Head of caudate nucleus (tissue), 42 donors: ENCODE measurements at regions of chr1 and their contacts with region 1.

Region 1: DNA sequence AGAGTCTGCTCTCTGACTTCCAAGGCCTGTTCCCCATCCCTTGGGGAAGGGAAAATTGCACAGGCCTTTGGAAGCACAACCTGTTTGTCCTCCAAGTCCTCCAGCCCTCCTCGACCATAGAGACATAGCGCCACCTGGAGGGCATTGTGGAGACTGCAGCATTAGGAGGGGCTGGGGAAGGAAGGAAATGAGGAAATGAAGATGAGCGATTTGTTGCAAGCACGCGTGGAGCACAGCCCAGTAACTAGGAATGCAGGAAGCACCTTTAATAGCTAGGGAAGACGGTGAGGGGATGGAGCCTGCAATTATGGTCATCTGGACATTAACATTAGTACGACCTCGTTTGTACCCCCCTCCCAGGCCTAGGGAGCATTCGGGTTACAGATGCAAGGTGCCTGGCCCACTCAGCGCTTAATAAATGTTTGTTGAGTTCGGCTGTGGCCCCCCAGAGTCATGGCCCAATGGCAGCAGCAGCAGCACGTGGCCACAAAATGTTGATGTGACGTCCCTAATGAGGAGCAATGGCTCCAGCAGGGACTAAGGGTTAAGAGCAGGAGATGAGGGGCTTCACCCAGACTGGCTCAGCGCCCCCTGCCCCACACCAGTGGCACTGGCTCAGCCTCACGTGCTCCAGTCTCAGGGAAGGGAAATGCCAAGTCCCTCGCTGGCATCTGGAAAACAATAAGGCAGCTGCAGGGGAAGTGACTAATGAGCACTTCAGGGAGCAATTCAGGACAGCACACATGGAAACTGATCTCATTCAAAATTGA is 8.0 kb upstream of the CAMK2N1 start:
- DNase-seq: peak; percentile 56 to 95 (median 89)

Region 2: GRCh38 chr1:19918057-19918456 is 576.0 kb before region 1 on chr1:
- intact Hi-C with region 1: loop called (anchors 10 kb)
- DNase-seq: peak; percentile 62 to 95 (median 86)

Region 3: DNA sequence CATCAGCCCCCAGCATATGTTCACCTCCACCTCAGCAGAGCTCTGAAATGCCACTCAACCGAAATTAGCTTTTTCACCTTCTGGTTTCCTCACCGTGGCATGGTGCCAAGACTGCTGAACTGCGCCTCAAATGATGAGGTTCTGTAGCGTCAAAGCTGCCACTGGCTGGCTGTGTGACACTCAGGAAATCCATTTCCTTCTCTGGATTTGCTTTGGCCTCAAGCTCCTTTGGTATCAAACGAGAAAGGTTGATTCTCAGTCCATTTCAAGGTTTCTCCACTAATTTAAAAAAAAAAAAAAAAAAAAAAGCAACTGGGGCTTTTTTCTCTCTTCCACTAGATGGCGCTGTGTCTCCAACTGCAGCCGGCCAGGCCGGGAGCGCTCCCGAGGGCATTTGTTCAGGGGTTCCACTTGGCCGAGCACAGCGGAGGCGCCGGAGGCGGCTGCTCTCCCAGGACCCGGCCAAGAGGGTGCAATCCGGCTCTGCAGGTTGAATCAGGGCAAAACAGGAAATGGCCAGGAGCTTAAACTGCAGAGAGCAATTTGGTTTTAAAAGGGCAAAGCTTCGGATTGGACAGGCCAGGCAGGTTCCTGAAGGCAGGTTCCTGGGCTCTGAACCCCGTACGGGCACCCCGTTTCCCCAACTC is 281.2 kb before region 1 on chr1:
- intact Hi-C with region 1: loop called (anchors 5 kb)
- DNase-seq: peak; percentile 37 to 86 (median 66)

Region 4: DNA sequence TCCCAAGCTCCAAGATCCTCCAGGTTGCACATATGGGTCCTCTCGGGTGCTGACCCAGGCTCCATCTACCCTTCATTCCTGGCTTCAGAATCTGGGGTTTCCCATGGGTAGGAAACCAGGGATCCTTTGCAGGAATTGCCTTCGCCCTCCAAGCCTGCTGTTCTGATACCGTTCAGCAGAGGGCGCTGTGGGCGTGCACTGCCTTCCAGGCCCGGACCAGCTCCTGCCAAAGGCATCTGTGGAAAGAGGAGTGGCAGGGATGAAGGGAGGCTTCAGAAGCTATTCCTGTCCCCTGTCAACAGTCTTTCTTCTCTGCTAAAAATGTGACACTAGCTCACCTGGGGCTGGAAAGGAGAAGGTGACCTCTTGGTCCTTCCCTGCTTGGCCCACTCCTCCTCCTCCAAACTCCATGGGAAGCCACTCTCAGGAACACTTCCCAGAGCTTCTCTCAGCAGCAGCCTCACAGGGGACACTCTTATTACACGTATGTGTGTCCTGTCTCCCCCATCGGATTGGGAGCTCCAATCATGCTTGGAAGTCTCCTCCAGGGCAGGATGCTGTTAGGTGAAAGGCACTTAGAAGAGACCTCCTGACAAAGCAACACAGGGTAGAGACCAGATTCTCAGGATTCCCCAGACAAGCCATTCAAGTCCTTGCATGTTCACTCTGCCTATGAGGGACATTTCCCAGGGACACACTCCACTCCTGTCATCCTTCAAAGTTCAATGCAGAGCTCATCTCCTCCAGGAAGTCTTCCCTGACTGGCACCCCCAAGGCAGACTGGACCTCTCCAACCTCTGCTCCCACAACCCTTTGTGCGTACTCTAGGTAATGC is 132.0 kb before region 1 on chr1:
- intact Hi-C with region 1: loop called (anchors 5 kb)
- DNase-seq: peak in 41 of 42 donors; percentile 65 to 94 (median 82)

Region 5: DNA sequence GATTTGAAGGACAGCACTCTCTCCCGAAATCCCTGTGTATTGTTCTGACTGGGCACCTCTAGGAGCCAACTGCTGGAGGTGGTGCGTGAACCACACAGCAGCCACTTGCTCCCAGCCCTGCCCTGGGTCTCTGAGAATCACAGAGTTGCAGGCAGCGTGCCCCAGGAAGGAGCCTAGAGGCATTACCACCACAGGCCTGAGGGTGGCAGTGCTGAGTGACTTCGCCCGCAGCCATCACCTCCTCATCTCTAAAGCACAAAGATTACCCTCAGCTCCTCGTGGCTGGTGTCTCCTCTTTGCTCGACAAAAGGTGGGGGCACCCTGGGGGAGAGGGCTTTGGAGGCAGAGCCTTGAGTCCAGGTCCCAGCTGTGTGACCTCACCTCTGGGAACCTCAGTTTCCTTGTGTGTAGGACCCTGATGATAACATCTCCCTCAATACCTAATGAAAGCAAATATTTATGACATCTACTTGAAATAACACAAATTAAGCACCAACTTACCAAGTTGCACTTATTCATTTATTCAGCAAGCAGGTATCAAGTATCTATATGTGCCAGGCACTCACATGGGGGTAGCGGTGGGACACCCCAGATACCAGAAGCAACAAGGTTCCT is 117.0 kb before region 1 on chr1:
- intact Hi-C with region 1: loop called (anchors 5 kb)
- DNase-seq: peak; percentile 55 to 88 (median 76)

Region 6: GRCh38 chr1:20430355-20431175 is 63.5 kb before region 1 on chr1:
- intact Hi-C with region 1: loop called (anchors 10 kb)
- DNase-seq: peak in 34 of 42 donors; percentile 29 to 84 (median 69)